Lower leg skin (tissue), 4 donors: ENCODE measurements at regions of chr14 and their contacts with region 1.

Region 1: GRCh38 chr14:96567289-96567899 is 65.2 kb downstream of the PAPOLA start:
- DNase-seq: no peak
- H3K4me3 ChIP-seq: no peak overlapping the region
- CTCF ChIP-seq: no peak
- POLR2A ChIP-seq: no peak

Region 2: DNA sequence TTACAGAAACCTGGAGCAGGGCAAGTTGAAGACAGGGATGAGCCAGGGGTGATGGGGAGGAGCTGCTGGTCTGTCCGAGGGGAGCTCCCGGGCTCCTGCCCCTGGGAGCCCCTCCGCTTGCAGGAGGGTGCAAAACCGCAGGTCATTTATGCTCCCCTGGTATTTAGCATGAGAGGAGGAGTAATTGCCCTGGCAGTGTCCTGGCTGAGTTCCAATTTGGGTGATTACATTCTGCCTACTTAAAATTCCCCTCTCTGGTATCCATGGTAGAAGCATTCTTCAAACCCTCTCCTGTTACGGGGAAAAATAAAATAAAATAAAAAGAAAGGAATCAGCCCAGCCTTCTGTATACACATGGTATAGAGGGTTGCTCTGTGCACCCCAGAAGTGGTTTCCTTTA is 168.1 kb after region 1 on chr14:
- intact Hi-C with region 1: loop called (anchors 5 kb)
- DNase-seq: no peak
- H3K4me3 ChIP-seq: no peak overlapping the region
- CTCF ChIP-seq: no peak
- POLR2A ChIP-seq: no peak